Activated T-helper 1 cell treated with anti-CD3 and anti-CD28 coated beads, Interleukin-12 subunit alpha, Interleukin-12 subunit beta, Interleukin-2, Interleukin-4 antibody, amounts not matched to agents 30 ng/mL and 10 ng/mL and 1 ng/mL, durations not matched to agents 14 hours and 24 hours and 36 hours (primary cell): ENCODE measurements at regions of chr3 and their contacts with region 1.

Region 1: DNA sequence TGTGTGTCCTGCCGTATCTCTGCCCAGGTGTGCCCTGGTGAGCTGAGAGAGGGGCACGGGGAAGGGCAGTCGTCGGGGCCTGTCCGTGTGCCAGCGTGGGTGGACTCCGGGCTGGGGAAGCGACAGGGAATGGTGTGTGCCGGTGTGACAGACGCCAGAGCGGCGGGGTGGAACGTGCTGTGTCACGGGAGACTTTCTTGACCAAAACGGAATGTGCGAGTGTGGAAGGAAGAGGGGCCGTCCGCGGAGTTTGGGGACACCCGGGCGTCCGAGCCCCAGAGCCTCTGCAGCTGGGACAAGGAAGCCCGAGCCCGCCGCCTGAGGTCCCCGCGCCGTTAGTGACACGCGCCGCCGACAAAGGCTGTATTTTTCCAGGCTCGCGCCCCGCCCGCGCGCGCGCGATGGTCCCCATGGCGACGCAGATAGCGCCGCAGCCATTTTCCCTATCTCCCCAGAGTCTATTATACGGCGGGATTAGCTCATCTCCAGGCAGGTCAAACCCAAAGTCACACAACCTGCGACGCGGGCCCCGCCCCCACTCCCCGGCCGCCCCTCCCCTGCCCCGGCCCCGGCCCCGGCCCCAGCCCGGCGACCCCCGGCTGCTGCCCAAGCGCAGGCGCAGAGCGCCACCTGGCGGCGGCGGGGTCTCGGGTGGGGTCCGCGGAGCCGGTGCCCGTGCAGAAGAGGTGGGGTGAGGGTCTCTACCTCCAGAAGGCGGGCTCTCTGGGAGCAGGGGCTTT is 4.6 kb upstream of the GATA2 start:
- DNase-seq: peak; percentile 55
- H3K4me3 Mint-ChIP-seq: peak overlapping the region; percentile 73
- H3K27ac Mint-ChIP-seq: peak overlapping the region; percentile 36
- H3K4me1 Mint-ChIP-seq: peaks cover 6% of the 10 kb centered on the region
- H3K27me3 Mint-ChIP-seq: peaks cover 54% of the 10 kb centered on the region

Region 2: DNA sequence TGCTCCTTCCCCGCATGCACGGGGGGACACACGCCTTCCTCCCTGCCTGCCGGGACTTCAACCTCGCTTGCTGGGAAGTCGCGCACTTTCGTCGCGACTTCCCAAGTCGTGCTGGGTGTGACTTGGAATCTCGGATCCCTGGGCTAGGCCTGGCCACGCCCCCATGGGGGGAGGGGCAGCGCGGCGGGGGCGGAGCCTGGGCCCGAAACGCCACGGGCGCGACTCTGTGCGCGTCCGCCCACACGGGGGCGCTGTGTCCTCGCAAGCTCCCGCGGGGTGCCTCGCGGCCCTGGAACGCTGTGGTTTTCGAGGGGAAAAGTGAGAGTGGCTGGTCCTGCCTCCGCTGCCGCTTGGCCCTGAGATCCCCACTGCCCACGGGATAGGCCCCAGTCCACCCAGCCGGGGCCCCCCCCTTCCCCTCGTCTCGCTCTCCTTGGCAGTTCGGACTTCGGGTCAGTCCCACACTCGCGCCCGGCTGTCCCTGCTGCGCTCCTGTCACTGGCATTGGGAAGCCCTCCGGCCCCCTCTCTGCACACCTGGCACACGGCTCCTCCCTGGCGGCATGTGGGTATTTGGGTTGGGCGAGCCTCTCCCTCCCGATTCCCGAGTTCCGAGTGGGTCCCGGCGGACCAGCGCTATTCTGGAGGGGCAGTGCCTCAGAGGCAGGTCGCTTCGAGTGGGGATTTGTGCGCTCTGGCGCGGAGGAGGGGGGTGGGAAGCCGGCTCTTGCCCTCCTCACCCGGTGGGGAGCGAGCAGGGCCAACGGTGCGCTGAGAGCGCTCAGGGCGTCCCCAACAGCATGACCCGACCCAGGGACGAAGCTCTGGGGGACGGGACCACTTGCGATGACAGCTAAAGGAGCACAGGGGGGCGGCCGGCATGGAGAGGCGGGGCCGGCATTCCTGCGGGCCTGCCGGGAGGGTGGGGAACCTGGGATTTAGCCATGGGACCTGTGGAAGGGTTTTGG is 421.8 kb before region 1 on chr3:
- intact Hi-C with region 1: loop called (anchors 1 kb)
- DNase-seq: peak; percentile 76
- H3K4me3 Mint-ChIP-seq: peak overlapping the region; percentile 62
- H3K27ac Mint-ChIP-seq: no peak overlapping the region
- H3K4me1 Mint-ChIP-seq: peaks cover 7% of the 10 kb centered on the region
- H3K27me3 Mint-ChIP-seq: peaks cover 10% of the 10 kb centered on the region

Region 3: DNA sequence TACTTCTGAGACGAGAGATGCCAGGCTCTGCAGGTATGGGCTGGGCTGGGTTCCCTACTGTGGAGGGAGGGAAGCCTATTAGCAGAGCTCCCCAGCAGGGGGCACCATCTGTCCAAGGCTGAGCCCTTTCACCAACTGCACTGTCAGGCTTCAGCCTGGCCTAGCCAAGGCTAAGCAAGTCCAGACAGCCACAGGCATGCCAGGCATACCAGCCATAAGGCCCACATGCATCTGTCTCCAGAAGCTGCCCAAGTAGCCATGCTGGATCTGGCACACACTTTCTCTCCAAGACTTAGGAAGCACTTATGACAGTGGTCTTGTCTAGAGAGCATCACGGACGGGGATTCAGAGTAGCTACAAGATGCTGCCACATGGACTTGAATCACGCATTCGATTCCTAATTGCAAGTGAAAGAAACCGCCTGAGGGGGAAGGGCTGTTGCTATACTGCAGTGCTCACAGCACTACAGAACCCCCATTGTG is 402.3 kb before region 1 on chr3:
- intact Hi-C with region 1: loop called (anchors 1 kb)
- DNase-seq: peak; percentile 66
- H3K4me3 Mint-ChIP-seq: no peak overlapping the region
- H3K27ac Mint-ChIP-seq: no peak overlapping the region
- H3K4me1 Mint-ChIP-seq: peaks cover 19% of the 10 kb centered on the region
- H3K27me3 Mint-ChIP-seq: no peaks in the 10 kb centered on the region

Region 4: GRCh38 chr3:128153156-128154041 is 344.2 kb before region 1 on chr3 and contains the start of gene EEFSEC:
- intact Hi-C with region 1: loop called (anchors 2 kb)
- DNase-seq: peak; percentile 82
- H3K4me3 Mint-ChIP-seq: peak within 1 kb of the TSS; percentile 94
- H3K27ac Mint-ChIP-seq: peak within 1 kb of the TSS; percentile 98
- H3K4me1 Mint-ChIP-seq: peaks cover 31% of the 10 kb centered on the region
- H3K27me3 Mint-ChIP-seq: peaks cover 3% of the 10 kb centered on the region
- total RNA-seq, gene EEFSEC: 18.7 and 19.5 TPM in 2 replicates

Region 5: GRCh38 chr3:128426128-128426921 is 71.2 kb before region 1 on chr3:
- intact Hi-C with region 1: loop called (anchors 1 kb)
- DNase-seq: peak; percentile 52
- H3K4me3 Mint-ChIP-seq: no peak overlapping the region
- H3K27ac Mint-ChIP-seq: no peak overlapping the region
- H3K4me1 Mint-ChIP-seq: no peaks in the 10 kb centered on the region
- H3K27me3 Mint-ChIP-seq: peaks cover 21% of the 10 kb centered on the region

Region 6: GRCh38 chr3:128456776-128457715 is 40.5 kb before region 1 on chr3:
- intact Hi-C with region 1: no loop called
- DNase-seq: no peak
- H3K4me3 Mint-ChIP-seq: no peak overlapping the region
- H3K27ac Mint-ChIP-seq: no peak overlapping the region
- H3K4me1 Mint-ChIP-seq: no peaks in the 10 kb centered on the region
- H3K27me3 Mint-ChIP-seq: peaks cover 35% of the 10 kb centered on the region

Region 7: GRCh38 chr3:128584412-128585020 is 87.0 kb after region 1 on chr3:
- intact Hi-C with region 1: loop called (anchors 1 kb)
- DNase-seq: no peak
- H3K4me3 Mint-ChIP-seq: no peak overlapping the region
- H3K27ac Mint-ChIP-seq: no peak overlapping the region
- H3K4me1 Mint-ChIP-seq: peaks cover 12% of the 10 kb centered on the region
- H3K27me3 Mint-ChIP-seq: peaks cover 8% of the 10 kb centered on the region

Region 8: GRCh38 chr3:128607710-128608048 is 110.1 kb after region 1 on chr3:
- intact Hi-C with region 1: loop called (anchors 1 kb)
- DNase-seq: no peak
- H3K4me3 Mint-ChIP-seq: no peak overlapping the region
- H3K27ac Mint-ChIP-seq: no peak overlapping the region
- H3K4me1 Mint-ChIP-seq: no peaks in the 10 kb centered on the region
- H3K27me3 Mint-ChIP-seq: peaks cover 12% of the 10 kb centered on the region